ENCODE measurements at regions of chr2 and their contacts with region 1.

Region 1: GRCh38 chr2:233430081-233430480 is 75.8 kb downstream of the DGKD start:
- DNase-seq: peak; percentile 51
- H3K4me3 ChIP-seq: no peak overlapping the region
- H3K27ac ChIP-seq: no peak overlapping the region
- H3K4me1 ChIP-seq: peaks cover 4% of the 10 kb centered on the region
- H3K27me3 ChIP-seq: no peaks in the 10 kb centered on the region
- CTCF ChIP-seq: no peak

Region 2: GRCh38 chr2:233474308-233475160 is 44.5 kb after region 1 on chr2:
- CTCF ChIA-PET with region 1: no interaction called
- dilution Hi-C with region 1: loop called (anchors 5 kb)
- in situ Hi-C with region 1: no loop called
- intact Hi-C with region 1: no loop called
- DNase-seq: no peak
- H3K4me3 ChIP-seq: no peak overlapping the region
- H3K27ac ChIP-seq: no peak overlapping the region
- H3K4me1 ChIP-seq: no peaks in the 10 kb centered on the region
- H3K27me3 ChIP-seq: no peaks in the 10 kb centered on the region
- CTCF ChIP-seq: no peak